Cardiac septum (tissue), 1 donor: ENCODE measurements at regions of chr2 and their contacts with region 1.

Region 1: DNA sequence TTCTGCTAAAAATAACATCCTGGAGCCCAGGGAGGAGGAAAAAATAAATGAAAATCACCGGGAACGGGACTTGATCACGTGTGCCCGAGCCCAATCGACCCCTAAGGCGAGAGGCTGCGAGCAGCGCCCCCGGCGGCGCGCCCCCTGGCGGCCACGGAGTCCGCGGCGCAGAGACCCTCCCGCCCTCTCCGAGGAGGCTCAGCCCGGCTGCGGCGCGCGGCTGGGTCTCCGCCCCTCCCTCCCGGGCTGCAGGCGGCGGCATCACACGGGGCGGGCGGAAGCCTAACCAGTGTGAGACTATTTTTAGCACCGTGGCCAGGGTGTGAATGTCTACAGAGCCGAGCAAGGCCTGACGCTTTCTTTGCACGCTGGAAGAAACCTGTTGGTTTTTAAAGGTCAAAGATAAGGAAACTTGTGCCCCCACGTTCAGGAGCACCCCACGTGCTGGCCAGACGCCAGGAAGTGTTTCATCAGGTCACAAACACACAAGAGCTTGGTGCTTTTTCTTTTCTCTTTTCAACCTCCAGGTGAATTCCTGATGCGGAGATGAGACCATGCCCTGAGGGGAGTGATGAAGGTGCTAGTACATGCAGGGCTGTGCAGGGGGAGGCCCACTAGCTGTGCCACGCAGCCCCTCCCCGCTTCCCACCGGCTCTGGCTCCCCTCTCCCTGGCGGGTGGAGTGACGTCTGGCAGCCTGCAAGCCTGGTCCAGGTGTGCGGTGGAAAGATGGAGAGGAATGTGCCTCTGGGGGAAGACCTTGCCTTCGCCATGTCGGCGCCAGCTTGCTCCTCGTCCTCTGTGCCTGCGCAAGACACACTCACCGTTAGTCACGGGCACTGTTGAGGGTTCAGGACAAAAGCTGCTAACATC is 35.3 kb upstream of the DNMT3A start:
- DNase-seq: peak; percentile 92

Region 2: GRCh38 chr2:25314514-25315315 is 62.3 kb before region 1 on chr2:
- intact Hi-C with region 1: loop called (anchors 5 kb)
- DNase-seq: peak; percentile 86